Activated T-helper 2 cell treated with anti-CD3 and anti-CD28 coated beads, Interferon-gamma antibody, Interleukin-2, Interleukin-4, amounts not matched to agents 10 μg/mL and 5 μg/mL and 100 μg/mL, durations not matched to agents 14 hours and 24 hours and 36 hours (primary cell): ENCODE measurements at regions of chr12 and their contacts with region 1.

Region 1: GRCh38 chr12:107317751-107318613 is 224.6 kb upstream of the CRY1 start:
- DNase-seq: peak; percentile 89
- H3K4me3 Mint-ChIP-seq: peak overlapping the region; percentile 87
- H3K27ac Mint-ChIP-seq: no peak overlapping the region
- H3K4me1 Mint-ChIP-seq: peaks cover 26% of the 10 kb centered on the region
- H3K27me3 Mint-ChIP-seq: peaks cover 30% of the 10 kb centered on the region

Region 2: DNA sequence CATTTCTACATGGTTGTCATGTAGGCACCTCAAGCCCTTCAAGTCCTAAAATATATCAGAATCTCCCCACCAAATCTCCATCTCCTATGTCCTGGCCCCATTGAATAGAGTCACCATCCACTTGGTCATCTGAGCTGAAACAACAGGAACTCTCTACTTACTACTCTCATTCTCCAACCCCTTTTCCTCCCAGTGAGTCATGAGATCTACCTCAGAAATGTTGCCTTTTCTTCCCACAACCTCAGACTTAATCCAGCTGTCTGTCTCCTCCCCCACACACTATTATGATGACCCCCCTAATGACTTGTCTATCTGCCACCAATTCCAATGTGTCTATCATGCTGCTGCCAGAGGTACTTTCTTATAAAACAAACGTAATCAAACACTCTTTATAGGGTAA is 434.6 kb before region 1 on chr12:
- intact Hi-C with region 1: no loop called
- DNase-seq: no peak
- H3K4me3 Mint-ChIP-seq: no peak overlapping the region
- H3K27ac Mint-ChIP-seq: no peak overlapping the region
- H3K4me1 Mint-ChIP-seq: no peaks in the 10 kb centered on the region
- H3K27me3 Mint-ChIP-seq: no peaks in the 10 kb centered on the region

Region 3: GRCh38 chr12:107131832-107132616 is 186.0 kb before region 1 on chr12:
- intact Hi-C with region 1: loop called (anchors 10 kb)
- DNase-seq: no peak
- H3K4me3 Mint-ChIP-seq: no peak overlapping the region
- H3K27ac Mint-ChIP-seq: no peak overlapping the region
- H3K4me1 Mint-ChIP-seq: peaks cover 2% of the 10 kb centered on the region
- H3K27me3 Mint-ChIP-seq: no peaks in the 10 kb centered on the region

Region 4: GRCh38 chr12:107243341-107243740 is 74.6 kb before region 1 on chr12:
- intact Hi-C with region 1: no loop called
- DNase-seq: no peak
- H3K4me3 Mint-ChIP-seq: no peak overlapping the region
- H3K27ac Mint-ChIP-seq: no peak overlapping the region
- H3K4me1 Mint-ChIP-seq: no peaks in the 10 kb centered on the region
- H3K27me3 Mint-ChIP-seq: peaks cover 27% of the 10 kb centered on the region

Region 5: GRCh38 chr12:107328442-107329133 is 10.6 kb after region 1 on chr12:
- intact Hi-C with region 1: loop called (anchors 1 kb)
- DNase-seq: no peak
- H3K4me3 Mint-ChIP-seq: no peak overlapping the region
- H3K27ac Mint-ChIP-seq: no peak overlapping the region
- H3K4me1 Mint-ChIP-seq: peaks cover 87% of the 10 kb centered on the region
- H3K27me3 Mint-ChIP-seq: no peaks in the 10 kb centered on the region

Region 6: DNA sequence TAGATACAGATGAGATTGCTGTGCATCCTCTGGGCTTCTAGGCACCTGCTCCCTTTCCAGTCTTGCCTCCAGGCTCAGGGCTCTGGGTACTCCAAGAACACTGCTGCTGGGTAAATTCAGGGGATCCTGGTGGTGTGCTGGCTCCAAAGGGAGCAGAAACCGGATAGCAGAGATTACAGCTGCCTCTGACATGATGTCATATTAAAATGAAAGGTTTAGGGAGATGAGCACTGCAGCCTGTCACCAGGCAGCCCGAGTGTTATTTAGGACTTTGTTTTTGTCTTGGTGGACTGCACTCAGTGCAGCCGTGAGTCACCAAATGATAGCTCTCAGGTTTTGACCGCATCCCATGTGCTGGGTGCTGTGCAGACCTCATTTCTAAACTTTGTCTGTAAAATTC is 41.4 kb after region 1 on chr12:
- intact Hi-C with region 1: no loop called
- DNase-seq: no peak
- H3K4me3 Mint-ChIP-seq: no peak overlapping the region
- H3K27ac Mint-ChIP-seq: no peak overlapping the region
- H3K4me1 Mint-ChIP-seq: peaks cover 42% of the 10 kb centered on the region
- H3K27me3 Mint-ChIP-seq: no peaks in the 10 kb centered on the region

Region 7: GRCh38 chr12:107372229-107372658 is 54.3 kb after region 1 on chr12:
- intact Hi-C with region 1: loop called (anchors 1 kb)
- DNase-seq: peak; percentile 36
- H3K4me3 Mint-ChIP-seq: peak overlapping the region; percentile 47
- H3K27ac Mint-ChIP-seq: peak overlapping the region; percentile 87
- H3K4me1 Mint-ChIP-seq: peaks cover 67% of the 10 kb centered on the region
- H3K27me3 Mint-ChIP-seq: no peaks in the 10 kb centered on the region

Region 8: DNA sequence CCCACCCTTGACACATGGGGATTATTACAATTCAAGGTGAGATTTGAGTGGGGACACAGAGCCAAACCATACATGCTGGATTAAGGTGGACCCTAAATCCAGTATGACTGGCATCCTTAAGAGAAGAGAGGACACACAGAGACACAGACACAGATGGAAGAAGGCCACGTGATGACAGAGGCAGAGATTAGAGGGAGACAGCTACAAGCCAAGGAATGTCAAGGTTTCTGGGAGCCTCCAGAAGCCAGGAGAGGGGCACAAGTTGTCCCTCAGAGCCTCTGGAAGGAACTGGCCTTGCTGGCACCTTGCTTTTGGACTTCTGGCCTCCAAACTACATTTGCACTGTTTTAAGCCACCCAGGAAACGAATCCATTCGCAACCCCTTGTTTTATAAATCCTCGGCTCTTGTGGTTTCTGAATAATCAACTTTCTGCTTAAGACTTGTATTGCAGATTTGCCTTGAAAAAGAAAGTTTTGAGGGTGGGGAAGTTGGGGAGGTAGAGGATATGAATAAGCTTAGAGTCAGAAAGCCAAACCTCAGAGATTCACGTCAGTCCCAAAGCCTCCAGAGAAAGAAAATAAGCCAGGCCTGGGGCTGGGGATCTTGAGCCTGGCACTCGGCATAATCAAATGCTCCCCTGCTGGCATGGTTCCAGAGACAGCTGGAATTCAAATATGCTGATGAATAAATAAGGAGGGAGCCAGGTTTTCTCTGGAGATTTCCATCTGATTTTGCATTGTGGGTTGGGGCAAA is 143.4 kb after region 1 on chr12:
- intact Hi-C with region 1: no loop called
- DNase-seq: no peak
- H3K4me3 Mint-ChIP-seq: no peak overlapping the region
- H3K27ac Mint-ChIP-seq: no peak overlapping the region
- H3K4me1 Mint-ChIP-seq: peaks cover 11% of the 10 kb centered on the region
- H3K27me3 Mint-ChIP-seq: no peaks in the 10 kb centered on the region

Region 9: DNA sequence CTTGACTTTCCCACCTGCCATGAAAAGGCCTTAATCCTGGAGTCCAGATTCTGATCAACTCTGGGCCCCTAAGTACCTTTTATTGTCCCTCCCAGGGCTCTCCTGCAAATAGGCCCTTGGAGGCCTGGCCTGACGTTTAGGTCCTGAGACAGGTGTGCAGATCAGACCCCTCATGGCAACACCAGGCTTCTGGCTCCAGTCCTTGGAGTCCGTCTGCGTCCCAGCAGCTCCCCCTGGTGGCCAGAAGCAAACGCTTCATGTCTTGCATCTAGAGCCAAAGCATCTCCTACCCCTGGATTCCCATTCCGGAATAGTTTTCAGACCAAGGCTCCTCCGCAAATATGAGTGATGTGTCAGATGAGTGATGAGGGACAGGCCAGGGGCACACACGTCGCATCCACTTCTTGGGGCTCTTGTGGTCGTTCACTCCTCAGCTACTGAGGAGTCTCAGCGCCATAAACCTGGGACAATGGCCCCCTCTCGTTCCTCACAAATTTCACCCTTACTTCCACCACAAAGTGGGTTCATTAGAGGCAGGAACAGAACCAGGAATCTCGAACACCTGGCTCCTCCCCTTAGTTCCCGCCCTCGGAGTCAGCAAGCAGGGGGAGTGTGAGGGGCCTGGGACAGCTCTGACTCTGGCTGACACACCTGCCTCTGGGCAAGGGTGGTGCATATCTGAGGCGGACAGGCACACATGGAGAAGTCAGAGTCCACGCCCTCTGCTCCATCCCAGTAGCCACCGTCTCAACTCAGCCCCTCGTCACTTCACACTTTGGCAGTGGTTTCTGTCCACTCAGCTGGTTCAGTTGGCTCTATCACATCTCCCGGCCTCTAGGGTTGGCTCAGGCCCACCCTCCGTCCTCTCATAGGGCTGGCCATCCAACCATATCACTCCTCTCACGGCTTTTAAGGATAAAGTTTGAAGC is 289.7 kb after region 1 on chr12:
- intact Hi-C with region 1: loop called (anchors 5 kb)
- DNase-seq: peak; percentile 62
- H3K4me3 Mint-ChIP-seq: no peak overlapping the region
- H3K27ac Mint-ChIP-seq: no peak overlapping the region
- H3K4me1 Mint-ChIP-seq: no peaks in the 10 kb centered on the region
- H3K27me3 Mint-ChIP-seq: no peaks in the 10 kb centered on the region